Posterior cingulate gyrus (tissue), 11 donors: ENCODE measurements at regions of chr16 and their contacts with region 1.

Region 1: DNA sequence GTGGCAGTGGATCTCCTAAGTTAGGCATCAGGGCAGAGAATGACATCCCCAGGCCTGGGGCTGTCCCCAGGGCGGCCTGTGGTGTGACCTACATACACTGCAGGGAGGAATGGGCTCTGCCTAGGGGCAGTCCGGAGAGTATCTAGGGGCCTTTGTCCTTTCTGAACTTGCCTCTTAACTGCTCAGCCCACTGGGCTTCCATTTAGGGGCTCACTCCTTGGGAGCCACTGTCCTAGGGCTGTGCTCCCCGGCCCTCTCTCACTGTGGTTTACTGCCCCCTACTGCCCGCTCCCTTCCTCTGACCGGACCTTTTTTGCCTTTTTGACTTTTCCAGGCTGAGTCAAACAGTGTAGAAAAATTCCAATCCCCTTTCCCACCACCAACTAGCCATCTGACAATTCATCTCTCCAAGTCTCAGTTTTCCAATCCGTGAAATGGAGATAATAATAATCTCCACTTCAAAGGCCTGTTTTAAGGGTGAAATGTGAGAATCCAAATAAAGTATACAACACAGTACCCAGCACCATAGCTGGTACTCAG is 66.8 kb downstream of the DNAH3 start:
- DNase-seq: peak; percentile 22 to 92 (median 65)

Region 2: GRCh38 chr16:20799599-20799998 is 284.2 kb before region 1 on chr16:
- intact Hi-C with region 1: loop called (anchors 2 kb)
- DNase-seq: no peak

Region 3: GRCh38 chr16:20849587-20850390 is 234.0 kb before region 1 on chr16:
- intact Hi-C with region 1: loop called (anchors 1 kb)
- DNase-seq: peak; percentile 43 to 93 (median 80)